OCI-LY7 (cell line): ENCODE measurements at regions of chr6 and their contacts with region 1.

Region 1: DNA sequence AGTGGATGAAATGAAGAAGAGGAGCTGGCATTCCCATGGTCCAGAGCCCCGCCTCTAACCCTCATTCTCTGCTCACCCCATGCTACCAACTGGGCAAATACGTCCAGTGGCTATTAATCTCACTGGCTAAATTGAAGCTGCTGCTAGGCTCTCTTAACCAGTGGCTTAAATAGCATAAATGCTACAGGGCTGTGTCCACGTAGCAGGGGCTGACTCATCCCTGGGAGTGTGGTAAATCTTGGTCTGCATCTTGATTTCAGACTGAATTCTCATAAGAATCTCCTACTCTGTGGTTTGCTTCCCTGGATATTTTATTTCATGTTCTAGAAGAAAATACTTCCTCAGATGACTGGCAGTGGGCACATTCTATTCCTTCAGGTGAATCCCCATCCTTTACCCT is 193.1 kb upstream of the ARG1 start:
- DNase-seq: no peak
- H3K4me3 ChIP-seq: no peak overlapping the region
- H3K27ac ChIP-seq: no peak overlapping the region
- H3K4me1 ChIP-seq: peaks cover 55% of the 10 kb centered on the region
- CTCF ChIP-seq: no peak

Region 2: GRCh38 chr6:131400054-131400781 is 20.3 kb after region 1 on chr6:
- CTCF ChIA-PET with region 1: no interaction called
- POLR2A ChIA-PET with region 1: interaction called, 69 read pairs
- intact Hi-C with region 1: no loop called
- DNase-seq: no peak
- H3K4me3 ChIP-seq: no peak overlapping the region
- H3K27ac ChIP-seq: no peak overlapping the region
- H3K4me1 ChIP-seq: no peaks in the 10 kb centered on the region
- CTCF ChIP-seq: no peak